Colonic mucosa (tissue), 4 donors: ENCODE measurements at regions of chr4 and their contacts with region 1.

Region 1: GRCh38 chr4:159102622-159103383 is at the start of gene RAPGEF2:
- DNase-seq: peak; percentile 95
- H3K4me3 ChIP-seq: peak within 1 kb of the TSS; percentile 92
- H3K27ac ChIP-seq: peak within 1 kb of the TSS; percentile 98
- H3K4me1 ChIP-seq: peaks cover 11% of the 10 kb centered on the region
- H3K27me3 ChIP-seq: no peaks in the 10 kb centered on the region
- CTCF ChIP-seq: no peak
- total RNA-seq, gene RAPGEF2: 22.8 to 40.0 TPM

Region 2: DNA sequence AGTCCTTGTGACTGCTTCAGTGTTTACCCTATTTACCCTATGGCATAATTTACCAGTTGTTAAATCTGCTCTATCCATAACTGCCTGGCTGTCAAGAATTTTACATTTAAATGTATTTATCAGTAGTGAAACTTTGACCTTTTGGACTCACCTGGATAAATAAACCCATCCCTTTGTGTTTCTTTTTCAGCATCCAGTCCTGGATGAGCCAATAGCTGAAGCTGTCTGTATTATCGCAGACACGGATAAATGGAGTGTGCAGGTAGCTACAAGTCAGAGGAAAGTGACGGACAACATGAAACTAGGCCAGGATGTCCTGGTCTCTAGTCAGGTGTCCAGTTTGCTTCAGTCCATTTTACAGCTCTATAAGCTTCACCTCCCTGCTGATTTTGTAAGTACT is 211.5 kb before region 1 on chr4:
- intact Hi-C with region 1: loop called (anchors 5 kb)
- DNase-seq: no peak
- H3K4me3 ChIP-seq: no peak overlapping the region
- H3K27ac ChIP-seq: no peak overlapping the region
- H3K4me1 ChIP-seq: no peaks in the 10 kb centered on the region
- H3K27me3 ChIP-seq: no peaks in the 10 kb centered on the region
- CTCF ChIP-seq: no peak